IMR-90 (cell line): ENCODE measurements at regions of chr15 and their contacts with region 1.

Region 1: DNA sequence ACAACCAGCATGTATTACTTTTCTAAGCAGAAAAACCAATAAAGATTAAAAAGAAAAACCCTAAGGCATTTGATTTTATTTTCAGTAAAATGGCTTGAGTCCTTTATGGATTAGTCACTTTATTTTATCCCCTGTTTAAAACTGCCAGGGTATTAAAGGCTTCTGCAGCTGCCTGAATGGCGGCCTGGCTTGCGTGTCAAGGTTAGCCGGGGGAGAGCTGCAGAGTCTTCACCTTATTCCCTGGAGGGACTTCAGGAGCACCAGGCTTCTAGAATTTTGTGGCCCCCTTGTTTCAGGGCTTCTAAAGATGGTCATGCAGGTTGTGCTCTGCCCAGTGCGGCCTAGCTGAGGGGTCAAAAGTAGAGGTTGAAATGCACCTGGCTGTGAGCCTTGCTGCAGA is 58.0 kb upstream of the ICE2 start:
- DNase-seq: no peak
- ATAC-seq: no peak
- H3K4me3 ChIP-seq: no peak overlapping the region
- H3K27ac ChIP-seq: no peak overlapping the region
- H3K4me1 ChIP-seq: peaks cover 2% of the 10 kb centered on the region; the same call in 1 of the 2 replicates
- H3K27me3 ChIP-seq: no peaks in the 10 kb centered on the region
- CTCF ChIP-seq: no peak
- POLR2A ChIP-seq: no peak
- RAD21 ChIP-seq: no peak

Region 2: GRCh38 chr15:60548101-60548500 is 11.2 kb after region 1 on chr15:
- CTCF ChIA-PET with region 1: interaction called, 4 read pairs
- POLR2A ChIA-PET with region 1: interaction called, 13 read pairs
- dilution Hi-C with region 1: no loop called
- in situ Hi-C with region 1: no loop called
- intact Hi-C with region 1: no loop called
- DNase-seq: no peak
- ATAC-seq: no peak
- H3K4me3 ChIP-seq: no peak overlapping the region
- H3K27ac ChIP-seq: no peak overlapping the region
- H3K4me1 ChIP-seq: no peaks in the 10 kb centered on the region
- H3K27me3 ChIP-seq: no peaks in the 10 kb centered on the region
- CTCF ChIP-seq: no peak
- POLR2A ChIP-seq: no peak
- RAD21 ChIP-seq: no peak